Ovary (tissue), 10 donors: ENCODE measurements at regions of chr14 and their contacts with region 1.

Region 1: DNA sequence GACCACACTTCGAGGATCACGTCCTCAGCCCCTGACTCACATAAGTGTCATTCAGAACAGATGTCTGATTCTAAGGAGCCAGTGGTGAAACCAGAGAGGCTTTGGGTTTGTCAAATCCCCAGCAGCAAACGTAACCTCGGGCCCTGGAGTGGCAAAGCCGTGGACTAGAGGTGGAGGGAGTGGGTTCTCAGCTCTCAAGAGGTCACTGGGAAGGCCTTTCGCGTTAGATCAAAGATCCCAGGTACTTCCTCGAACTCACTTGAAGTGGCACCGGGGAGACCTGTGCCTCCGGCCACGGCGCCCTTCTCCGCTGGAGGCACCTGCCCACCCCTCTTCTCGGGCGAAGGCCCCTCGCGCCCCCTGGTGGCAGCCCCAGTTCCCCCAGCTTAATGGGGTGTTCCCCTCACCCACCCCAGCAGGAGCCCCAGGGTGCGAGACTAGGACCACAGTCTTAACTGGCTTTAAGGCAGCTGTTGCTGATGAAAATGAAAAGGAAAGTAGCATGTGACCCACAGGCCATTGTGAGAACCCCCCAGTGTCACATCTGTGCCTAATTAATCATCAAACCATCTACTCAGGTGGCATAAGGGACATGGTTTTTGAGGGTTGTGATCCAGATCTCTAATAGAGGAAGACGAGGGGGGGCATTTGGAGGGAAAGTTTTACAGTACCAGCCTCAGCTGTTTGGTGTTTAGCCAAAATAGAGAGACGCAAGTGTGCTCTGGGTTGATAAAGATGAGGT is 672 bp upstream of the ESR2 start:
- DNase-seq: peak; percentile 83 to 92 (median 87)
- H3K4me3 ChIP-seq: peak overlapping the region; percentile 43
- H3K27ac ChIP-seq: peak overlapping the region in 1 of 2 donors; percentile 42
- H3K4me1 ChIP-seq: peaks cover 6% of the 10 kb centered on the region
- H3K27me3 ChIP-seq: no peaks in the 10 kb centered on the region
- CTCF ChIP-seq: peak; percentile 77 to 88 (median 80)
- EP300 ChIP-seq: no peak
- POLR2A ChIP-seq: no peak

Region 2: GRCh38 chr14:63800651-63801375 is 494.0 kb before region 1 on chr14:
- intact Hi-C with region 1: loop called (anchors 5 to 10 kb)
- DNase-seq: no peak
- H3K4me3 ChIP-seq: no peak overlapping the region
- H3K27ac ChIP-seq: no peak overlapping the region
- H3K4me1 ChIP-seq: no peaks in the 10 kb centered on the region
- H3K27me3 ChIP-seq: no peaks in the 10 kb centered on the region
- CTCF ChIP-seq: no peak
- EP300 ChIP-seq: no peak
- POLR2A ChIP-seq: no peak

Region 3: GRCh38 chr14:64005822-64006221 is 289.0 kb before region 1 on chr14:
- intact Hi-C with region 1: loop called in 2 of 4 experiments (anchors 10 kb)
- DNase-seq: no peak
- H3K4me3 ChIP-seq: no peak overlapping the region
- H3K27ac ChIP-seq: no peak overlapping the region
- H3K4me1 ChIP-seq: peaks cover 2% of the 10 kb centered on the region
- H3K27me3 ChIP-seq: no peaks in the 10 kb centered on the region
- CTCF ChIP-seq: no peak
- EP300 ChIP-seq: no peak
- POLR2A ChIP-seq: no peak

Region 4: GRCh38 chr14:64137657-64138290 is 157.1 kb before region 1 on chr14:
- intact Hi-C with region 1: loop called in 3 of 4 experiments (anchors 5 to 10 kb)
- DNase-seq: peak; percentile 27 to 58 (median 46)
- H3K4me3 ChIP-seq: no peak overlapping the region
- H3K27ac ChIP-seq: no peak overlapping the region
- H3K4me1 ChIP-seq: no peaks in the 10 kb centered on the region
- H3K27me3 ChIP-seq: no peaks in the 10 kb centered on the region
- CTCF ChIP-seq: peak in 1 of 3 donors; percentile 27
- EP300 ChIP-seq: no peak
- POLR2A ChIP-seq: no peak

Region 5: DNA sequence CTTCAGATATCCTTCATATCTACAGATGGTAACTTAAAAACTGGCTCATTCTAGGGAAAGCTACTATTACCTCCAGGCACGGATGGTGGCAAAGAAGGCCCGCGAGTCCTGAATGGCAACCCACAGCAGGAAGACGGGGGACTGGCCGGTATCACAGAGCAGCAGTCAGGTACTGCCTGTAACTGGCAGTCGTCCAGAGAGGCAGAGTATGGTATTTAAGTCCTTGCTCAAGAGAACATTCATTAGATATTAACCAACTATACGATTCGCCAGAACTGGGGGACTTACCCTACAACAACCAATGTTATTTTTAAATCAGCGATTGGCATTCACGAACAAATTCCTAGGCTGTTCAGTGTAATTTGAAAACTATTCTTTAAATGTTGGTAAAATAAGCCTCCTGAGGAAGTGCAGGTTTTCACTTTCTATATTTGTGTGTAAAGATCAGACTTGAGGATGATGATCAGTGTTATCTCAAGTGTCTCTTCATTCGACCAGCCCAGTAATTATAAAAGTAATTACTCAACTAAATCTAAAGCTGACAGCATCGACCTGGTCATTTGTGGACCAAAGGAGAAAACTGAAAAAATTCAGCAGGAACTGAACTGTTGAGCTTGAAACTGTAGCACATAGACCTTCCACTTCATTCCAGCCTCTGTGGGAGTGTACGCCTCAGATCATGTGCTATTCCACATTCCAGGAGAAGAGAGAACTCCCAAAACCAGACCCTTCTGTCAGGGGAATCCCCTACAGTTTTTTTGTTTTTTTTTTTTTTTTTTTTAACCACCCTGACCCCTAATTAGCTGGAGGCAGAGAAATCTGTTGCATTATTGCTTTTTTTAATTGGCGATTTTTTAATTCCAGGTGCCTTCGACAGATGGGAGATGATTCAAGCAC is 76.3 kb before region 1 on chr14:
- intact Hi-C with region 1: loop called in 2 of 4 experiments (anchors 5 to 10 kb)
- DNase-seq: peak in 4 of 5 donors; percentile 42 to 65 (median 58)
- H3K4me3 ChIP-seq: no peak overlapping the region
- H3K27ac ChIP-seq: peak overlapping the region; percentile 41 to 67
- H3K4me1 ChIP-seq: peaks cover 10% of the 10 kb centered on the region
- H3K27me3 ChIP-seq: no peaks in the 10 kb centered on the region
- CTCF ChIP-seq: no peak
- EP300 ChIP-seq: no peak
- POLR2A ChIP-seq: no peak

Region 6: DNA sequence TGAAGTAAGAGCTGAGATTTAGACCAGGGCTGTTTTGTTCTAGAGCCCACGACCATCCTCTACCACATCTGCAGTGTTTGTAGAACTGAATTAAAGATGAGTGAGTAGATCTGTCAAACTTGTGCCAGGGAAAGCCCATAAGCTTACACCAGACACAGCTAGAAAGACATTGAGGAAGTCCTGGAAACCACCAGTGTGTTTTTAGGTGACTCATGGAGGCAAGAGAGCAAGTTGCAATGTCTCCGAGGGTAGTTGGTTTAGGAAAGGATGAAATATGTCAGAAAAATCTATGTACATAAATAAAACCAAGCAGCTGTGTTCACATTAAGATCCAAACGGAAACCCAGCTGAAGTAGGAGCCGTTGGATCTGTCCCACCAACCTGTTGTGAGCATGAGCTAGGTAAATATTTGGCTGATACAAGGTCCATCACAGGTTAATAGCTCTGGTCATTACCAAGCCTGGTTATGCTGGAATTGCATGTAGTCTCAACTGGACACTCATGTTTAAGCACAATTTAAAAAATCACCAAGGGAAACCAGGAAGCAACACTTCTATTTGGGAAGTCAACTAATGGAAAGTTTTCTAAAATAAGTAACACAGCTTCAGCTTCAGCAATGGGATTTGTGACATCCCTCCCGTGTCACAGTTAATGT is 359.5 kb after region 1 on chr14:
- intact Hi-C with region 1: no loop called
- DNase-seq: no peak
- H3K4me3 ChIP-seq: no peak overlapping the region
- H3K27ac ChIP-seq: no peak overlapping the region
- H3K4me1 ChIP-seq: no peaks in the 10 kb centered on the region
- H3K27me3 ChIP-seq: no peaks in the 10 kb centered on the region
- CTCF ChIP-seq: no peak
- EP300 ChIP-seq: no peak
- POLR2A ChIP-seq: no peak

Region 7: DNA sequence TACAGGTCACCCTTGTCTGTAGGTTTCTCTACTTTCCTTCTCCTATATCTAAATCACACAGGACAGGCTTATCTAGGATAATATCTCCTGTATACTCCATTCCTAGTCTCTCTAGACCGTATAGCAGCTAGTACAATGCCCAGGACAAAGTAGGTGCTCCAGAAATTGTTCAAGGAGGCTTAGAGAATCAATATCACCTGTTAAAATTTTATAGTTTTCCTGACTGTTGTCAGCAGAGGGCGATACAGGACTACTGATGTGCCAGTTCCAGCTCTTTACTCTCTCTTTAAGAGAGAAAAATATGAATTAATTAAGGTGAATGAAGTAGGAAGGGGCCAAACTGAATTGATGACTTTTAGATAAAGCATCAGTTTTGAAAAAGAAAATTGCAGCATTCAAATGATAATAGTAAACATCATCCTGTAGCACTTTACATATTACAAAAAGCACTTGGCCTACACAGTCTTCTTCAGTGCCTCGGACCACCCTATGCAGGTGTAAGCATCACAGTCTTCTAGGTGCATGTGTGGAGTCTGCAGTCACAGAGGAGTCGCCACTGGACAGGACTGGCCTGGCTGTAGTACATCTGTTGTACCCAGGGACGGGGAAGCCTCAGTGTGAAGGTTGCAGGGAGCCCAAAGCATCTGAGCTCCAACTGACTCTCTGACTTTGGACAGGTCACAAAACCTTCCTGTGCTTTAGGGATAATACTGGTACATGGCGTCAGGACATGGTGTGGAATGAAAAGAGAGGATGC is 869.4 kb after region 1 on chr14:
- intact Hi-C with region 1: no loop called
- DNase-seq: no peak
- H3K4me3 ChIP-seq: no peak overlapping the region
- H3K27ac ChIP-seq: no peak overlapping the region
- H3K4me1 ChIP-seq: no peaks in the 10 kb centered on the region
- H3K27me3 ChIP-seq: no peaks in the 10 kb centered on the region
- CTCF ChIP-seq: peak; percentile 21 to 51 (median 44)
- EP300 ChIP-seq: no peak
- POLR2A ChIP-seq: no peak